ENCODE measurements at regions of chr6 and their contacts with region 1.

Region 1: DNA sequence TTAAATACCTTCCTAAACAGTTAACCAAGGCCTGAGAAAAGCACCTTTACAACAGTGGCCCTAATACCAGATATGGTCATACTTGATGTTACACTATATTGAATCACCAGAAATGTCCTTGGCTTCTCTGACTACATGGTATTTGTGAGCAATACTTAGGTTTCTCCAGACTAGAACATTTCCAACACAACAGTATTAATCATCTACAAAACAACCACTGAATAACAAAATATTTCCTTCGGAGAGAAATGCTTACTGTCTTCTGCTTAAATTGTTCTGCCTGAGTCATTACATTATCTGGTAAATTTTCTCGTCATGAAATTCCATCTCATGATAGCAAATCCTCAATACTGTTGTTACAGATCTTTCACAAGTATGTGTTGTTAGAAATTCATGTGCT is 252.9 kb upstream of the RUNX2 start:
- DNase-seq: peak; percentile 68
- ATAC-seq: peak; percentile 75
- H3K4me3 ChIP-seq: no peak overlapping the region
- H3K27ac ChIP-seq: 0 out of 2 replicates have a peak overlapping the region, but pooled peaks have one; percentile 12
- H3K4me1 ChIP-seq: no peaks in the 10 kb centered on the region
- H3K27me3 ChIP-seq: no peaks in the 10 kb centered on the region
- CTCF ChIP-seq: no peak

Region 2: DNA sequence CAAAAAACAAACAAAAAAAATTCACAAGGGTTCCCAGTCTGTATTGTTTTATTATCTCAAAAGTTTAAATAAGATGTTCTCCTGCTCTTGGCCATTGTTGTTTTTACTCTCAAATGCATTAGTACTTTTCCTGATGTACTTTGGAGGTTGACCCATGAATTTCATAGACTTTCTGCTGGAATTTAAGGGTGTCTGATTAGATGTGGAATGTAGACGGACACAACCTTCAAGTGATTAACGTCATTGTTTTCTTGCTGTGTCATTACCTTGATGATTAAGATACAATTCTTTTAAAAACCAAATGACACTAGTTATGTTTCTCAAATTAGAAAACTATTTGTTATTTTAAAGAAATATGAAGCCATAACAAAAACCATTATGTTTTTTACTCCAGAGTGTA is 168.5 kb before region 1 on chr6:
- CTCF ChIA-PET with region 1: no interaction called
- POLR2A ChIA-PET with region 1: no interaction called
- intact Hi-C with region 1: no loop called
- DNase-seq: no peak
- ATAC-seq: no peak
- H3K4me3 ChIP-seq: no peak overlapping the region
- H3K27ac ChIP-seq: no peak overlapping the region
- H3K4me1 ChIP-seq: no peaks in the 10 kb centered on the region
- H3K27me3 ChIP-seq: no peaks in the 10 kb centered on the region
- CTCF ChIP-seq: no peak

Region 3: GRCh38 chr6:45703041-45703739 is 627.9 kb after region 1 on chr6:
- CTCF ChIA-PET with region 1: interaction called, 11 read pairs
- POLR2A ChIA-PET with region 1: no interaction called
- intact Hi-C with region 1: no loop called
- DNase-seq: peak; percentile 65
- ATAC-seq: peak; percentile 69
- H3K4me3 ChIP-seq: no peak overlapping the region
- H3K27ac ChIP-seq: peak overlapping the region; percentile 60
- H3K4me1 ChIP-seq: peaks cover 26% of the 10 kb centered on the region
- H3K27me3 ChIP-seq: no peaks in the 10 kb centered on the region
- CTCF ChIP-seq: no peak

Measured in PC-3 (cell line).